AG04449 (cell line): ENCODE measurements at regions of chr17 and their contacts with region 1.

Region 1: DNA sequence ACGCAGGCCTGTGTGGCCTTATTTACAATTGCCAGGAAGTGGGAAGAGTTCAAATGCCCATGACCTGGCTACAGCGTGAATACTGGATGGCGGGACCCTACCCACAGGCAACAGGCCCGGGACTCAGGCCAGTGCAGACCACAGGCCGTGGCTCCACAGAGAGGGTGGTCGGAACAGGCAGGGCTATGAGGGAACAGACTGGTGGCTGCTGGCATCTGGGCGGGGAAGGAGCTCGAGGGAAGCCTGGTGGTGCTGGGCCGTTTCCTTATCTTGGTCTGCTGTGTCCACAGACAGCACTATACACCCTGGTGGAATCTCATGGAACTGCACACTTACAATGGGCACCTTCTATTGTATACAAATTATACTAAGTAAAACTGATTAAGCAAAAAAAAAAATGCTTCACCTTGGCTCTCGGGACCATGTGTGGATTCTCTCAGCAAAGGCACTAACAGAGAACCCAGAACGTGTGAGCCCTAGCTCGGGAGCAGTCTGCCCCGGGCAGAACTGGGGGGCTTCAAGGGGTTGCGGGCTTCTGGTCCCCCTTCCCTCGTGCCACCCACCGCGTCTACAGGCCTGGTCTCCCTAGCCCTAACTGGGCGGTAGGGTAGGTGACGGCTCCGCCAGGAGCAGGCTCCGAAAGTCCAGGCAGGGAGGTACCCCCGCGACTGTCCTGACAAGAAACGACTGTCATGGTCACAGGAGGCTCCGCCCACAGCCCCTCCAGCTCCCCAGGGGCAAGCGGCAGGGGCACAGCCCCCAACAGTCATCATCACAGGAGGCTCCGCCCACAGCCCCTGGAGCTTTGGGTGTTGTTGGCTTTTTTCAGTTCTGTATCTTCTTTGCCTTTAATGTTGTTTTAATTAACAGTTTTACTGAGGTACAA is 21.8 kb downstream of the CEP131 start:
- DNase-seq: peak; percentile 14
- H3K4me3 ChIP-seq: no peak overlapping the region
- CTCF ChIP-seq: peak; percentile 47

Region 2: GRCh38 chr17:81189670-81190530 is 11.0 kb before region 1 on chr17:
- CTCF ChIA-PET with region 1: interaction called, 36 read pairs
- POLR2A ChIA-PET with region 1: no interaction called
- DNase-seq: no peak
- H3K4me3 ChIP-seq: no peak overlapping the region
- CTCF ChIP-seq: peak; percentile 6